ENCODE measurements at regions of chr10 and their contacts with region 1.

Region 1: GRCh38 chr10:117216611-117217195 is 19.4 kb downstream of the KCNK18 start:
- DNase-seq: peak in 1 of 2 donors; percentile 27
- H3K4me3 ChIP-seq: peak overlapping the region; percentile 35 to 37
- H3K27ac ChIP-seq: no peak overlapping the region
- H3K4me1 ChIP-seq: peaks cover 0 to 15% (median 11%) of the 10 kb centered on the region in 4 donors
- H3K27me3 ChIP-seq: peaks cover 0 to 53% of the 10 kb centered on the region in 2 donors
- CTCF ChIP-seq: peak; percentile 98 to 100

Region 2: GRCh38 chr10:116574797-116575196 is 641.9 kb before region 1 on chr10:
- intact Hi-C with region 1: no loop called
- DNase-seq: no peak
- H3K4me3 ChIP-seq: no peak overlapping the region
- H3K27ac ChIP-seq: no peak overlapping the region
- H3K4me1 ChIP-seq: no peaks in the 10 kb centered on the region
- H3K27me3 ChIP-seq: no peaks in the 10 kb centered on the region
- CTCF ChIP-seq: no peak

Region 3: DNA sequence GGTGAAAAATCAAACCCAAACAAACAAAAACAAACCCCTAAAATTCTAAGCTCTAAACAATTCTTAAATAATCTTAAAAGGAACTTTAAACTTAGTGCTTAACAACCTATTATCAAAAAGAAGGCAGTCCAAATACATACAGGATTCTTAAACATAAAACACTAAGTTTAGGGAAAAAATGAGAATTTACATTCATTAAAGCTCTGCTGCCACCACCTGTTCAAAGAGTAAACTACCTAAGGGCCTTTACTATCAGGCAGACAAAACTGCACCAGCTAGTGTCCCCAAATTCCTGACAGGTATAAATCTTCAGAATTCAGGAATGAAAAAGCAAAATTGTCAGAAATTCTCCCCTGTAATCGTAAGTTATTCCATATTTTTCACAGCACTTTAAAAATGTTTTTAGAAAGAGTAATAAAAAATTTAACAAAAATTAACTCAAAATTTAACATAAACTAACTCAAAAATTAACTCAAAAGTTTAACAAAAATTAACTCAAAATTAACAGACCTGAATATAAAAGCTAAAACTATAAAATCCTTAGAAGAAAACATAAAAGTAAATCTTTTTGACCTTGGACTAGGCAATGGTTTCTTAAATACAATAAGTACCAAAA is 103.5 kb after region 1 on chr10:
- intact Hi-C with region 1: loop called (anchors 10 kb)
- DNase-seq: no peak
- H3K4me3 ChIP-seq: no peak overlapping the region
- H3K27ac ChIP-seq: no peak overlapping the region
- H3K4me1 ChIP-seq: no peaks in the 10 kb centered on the region
- H3K27me3 ChIP-seq: no peaks in the 10 kb centered on the region
- CTCF ChIP-seq: peak; percentile 24 to 26

Region 4: GRCh38 chr10:117461766-117462423 is 245.2 kb after region 1 on chr10:
- intact Hi-C with region 1: loop called (anchors 10 kb)
- DNase-seq: peak; percentile 84 to 92
- H3K4me3 ChIP-seq: no peak overlapping the region
- H3K27ac ChIP-seq: peak overlapping the region; percentile 64 to 80
- H3K4me1 ChIP-seq: peaks cover 5 to 46% (median 25%) of the 10 kb centered on the region in 4 donors
- H3K27me3 ChIP-seq: no peaks in the 10 kb centered on the region
- CTCF ChIP-seq: no peak

Region 5: DNA sequence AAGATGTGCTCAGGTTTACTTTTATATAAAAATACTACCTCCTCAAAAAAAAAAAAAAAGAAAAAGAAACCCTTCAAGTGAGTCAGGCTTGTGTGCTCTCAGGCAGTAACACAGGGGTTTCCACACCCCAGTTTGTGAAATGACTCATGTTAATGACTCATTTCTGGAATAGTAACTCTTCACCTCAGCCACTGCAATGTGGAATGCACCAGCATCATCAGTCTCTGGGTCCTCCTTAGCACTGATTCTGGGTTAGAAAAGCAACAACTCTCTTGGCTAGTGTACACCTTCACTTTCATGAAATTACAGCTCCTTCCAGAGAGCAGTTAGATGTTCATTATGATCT is 436.4 kb after region 1 on chr10:
- intact Hi-C with region 1: no loop called
- DNase-seq: no peak
- H3K4me3 ChIP-seq: no peak overlapping the region
- H3K27ac ChIP-seq: no peak overlapping the region
- H3K4me1 ChIP-seq: no peaks in the 10 kb centered on the region
- H3K27me3 ChIP-seq: no peaks in the 10 kb centered on the region
- CTCF ChIP-seq: no peak

Region 6: GRCh38 chr10:118241229-118242137 is 1024.8 kb after region 1 on chr10:
- intact Hi-C with region 1: loop called (anchors 10 kb)
- DNase-seq: peak; percentile 82 to 87
- H3K4me3 ChIP-seq: no peak overlapping the region
- H3K27ac ChIP-seq: no peak overlapping the region
- H3K4me1 ChIP-seq: no peaks in the 10 kb centered on the region
- H3K27me3 ChIP-seq: peaks cover 0 to 31% of the 10 kb centered on the region in 2 donors
- CTCF ChIP-seq: peak; percentile 86 to 89